Heart right ventricle (tissue), 16 donors: ENCODE measurements at regions of chr13 and their contacts with region 1.

Region 1: GRCh38 chr13:33542283-33543088 is 256.9 kb upstream of the STARD13 start:
- DNase-seq: peak; percentile 98 to 99
- ATAC-seq: peak; percentile 94 to 98 (median 96)
- H3K4me3 ChIP-seq: peak overlapping the region; percentile 11 to 62 (median 52)
- H3K27ac ChIP-seq: peak overlapping the region; percentile 92 to 99 (median 96)
- H3K4me1 ChIP-seq: peaks cover 2 to 45% (median 33%) of the 10 kb centered on the region in 9 donors
- H3K27me3 ChIP-seq: no peaks in the 10 kb centered on the region
- CTCF ChIP-seq: peak; percentile 75 to 97 (median 92)

Region 2: GRCh38 chr13:32669030-32669646 is 873.3 kb before region 1 on chr13:
- intact Hi-C with region 1: loop called in 1 of 10 experiments (anchors 10 kb)
- DNase-seq: no peak
- ATAC-seq: no peak
- H3K4me3 ChIP-seq: no peak overlapping the region
- H3K27ac ChIP-seq: no peak overlapping the region
- H3K4me1 ChIP-seq: no peaks in the 10 kb centered on the region
- H3K27me3 ChIP-seq: no peaks in the 10 kb centered on the region
- CTCF ChIP-seq: peak; percentile 34 to 79 (median 64)

Region 3: DNA sequence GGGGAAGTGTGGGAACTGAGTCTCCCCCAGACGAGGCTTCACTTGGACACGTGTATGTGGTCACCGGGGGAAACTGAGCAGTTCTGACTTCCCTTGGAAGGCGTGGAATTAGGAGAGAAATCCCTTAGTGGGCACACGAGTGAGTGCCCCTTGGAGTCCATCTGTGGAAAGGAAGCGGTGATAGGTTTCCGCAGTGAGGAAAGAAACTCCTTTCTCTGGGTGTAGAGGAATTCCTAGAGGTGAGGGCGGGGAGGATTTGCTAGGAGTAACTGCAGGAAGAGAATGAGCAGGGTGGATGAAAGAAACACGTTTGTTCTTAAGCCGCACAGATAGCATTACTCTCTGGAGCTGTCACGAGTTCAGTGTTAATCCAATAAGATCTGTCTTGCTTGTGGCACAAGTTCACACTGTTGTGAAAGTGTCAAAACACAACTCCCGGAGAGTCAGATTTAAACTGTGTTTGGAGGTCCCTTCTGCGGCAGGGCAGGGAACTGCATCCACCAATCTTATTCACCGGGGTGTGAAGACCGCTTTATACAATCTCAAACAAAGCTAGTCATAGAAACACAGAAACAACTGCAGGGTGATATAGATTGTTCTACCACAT is 525.1 kb before region 1 on chr13:
- intact Hi-C with region 1: loop called in 1 of 10 experiments (anchors 5 kb)
- DNase-seq: peak; percentile 35 to 62
- ATAC-seq: peak; percentile 72 to 86 (median 82)
- H3K4me3 ChIP-seq: peak overlapping the region; percentile 55 to 71 (median 64)
- H3K27ac ChIP-seq: peak overlapping the region; percentile 78 to 95 (median 91)
- H3K4me1 ChIP-seq: peaks cover 0 to 44% (median 17%) of the 10 kb centered on the region in 9 donors
- H3K27me3 ChIP-seq: peaks cover 0 to 38% (median 0%) of the 10 kb centered on the region in 7 donors
- CTCF ChIP-seq: peak; percentile 27 to 75 (median 62)

Region 4: DNA sequence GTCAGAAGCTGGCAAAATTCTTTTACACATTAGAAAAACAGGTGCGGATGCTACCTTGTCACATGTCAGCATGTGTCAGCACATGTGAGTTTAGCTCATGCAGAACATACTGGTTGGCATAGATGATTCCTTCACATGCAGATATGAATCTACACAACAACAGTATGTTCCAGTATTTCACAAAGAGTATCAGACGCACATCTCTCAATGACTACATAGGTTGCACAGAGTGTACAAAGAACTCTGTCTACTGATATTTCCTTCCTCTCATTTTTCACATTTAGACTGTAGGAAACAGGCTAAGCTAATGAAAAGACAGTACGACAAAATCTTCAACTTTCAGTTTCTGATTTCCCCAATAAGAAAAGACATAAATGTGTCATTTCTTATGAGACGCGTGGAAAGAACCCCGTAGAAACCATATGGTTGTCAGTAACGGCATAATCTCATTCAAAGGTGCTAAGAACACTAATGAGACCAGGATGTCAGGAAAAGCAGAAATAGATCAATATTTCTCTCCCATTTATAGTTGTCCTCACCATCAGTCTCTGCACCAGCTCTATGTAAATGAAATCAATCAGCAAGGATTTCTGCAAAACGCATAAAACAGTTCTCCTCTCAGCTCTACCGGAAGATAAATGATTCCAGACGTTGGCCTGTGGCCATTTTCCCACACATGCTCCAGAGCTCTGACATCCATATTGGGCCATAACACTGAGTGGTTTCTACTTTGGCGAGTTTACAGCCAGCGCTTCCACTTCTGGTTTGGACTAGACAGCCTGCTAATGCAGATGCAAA is 338.2 kb before region 1 on chr13:
- intact Hi-C with region 1: loop called in 1 of 10 experiments (anchors 5 kb)
- DNase-seq: peak; percentile 50 to 87
- ATAC-seq: peak; percentile 73 to 89 (median 82)
- H3K4me3 ChIP-seq: peak overlapping the region in 9 of 10 donors; percentile 21 to 54 (median 44)
- H3K27ac ChIP-seq: peak overlapping the region; percentile 54 to 87 (median 80)
- H3K4me1 ChIP-seq: peaks cover 27 to 99% (median 82%) of the 10 kb centered on the region in 9 donors
- H3K27me3 ChIP-seq: no peaks in the 10 kb centered on the region
- CTCF ChIP-seq: no peak

Region 5: DNA sequence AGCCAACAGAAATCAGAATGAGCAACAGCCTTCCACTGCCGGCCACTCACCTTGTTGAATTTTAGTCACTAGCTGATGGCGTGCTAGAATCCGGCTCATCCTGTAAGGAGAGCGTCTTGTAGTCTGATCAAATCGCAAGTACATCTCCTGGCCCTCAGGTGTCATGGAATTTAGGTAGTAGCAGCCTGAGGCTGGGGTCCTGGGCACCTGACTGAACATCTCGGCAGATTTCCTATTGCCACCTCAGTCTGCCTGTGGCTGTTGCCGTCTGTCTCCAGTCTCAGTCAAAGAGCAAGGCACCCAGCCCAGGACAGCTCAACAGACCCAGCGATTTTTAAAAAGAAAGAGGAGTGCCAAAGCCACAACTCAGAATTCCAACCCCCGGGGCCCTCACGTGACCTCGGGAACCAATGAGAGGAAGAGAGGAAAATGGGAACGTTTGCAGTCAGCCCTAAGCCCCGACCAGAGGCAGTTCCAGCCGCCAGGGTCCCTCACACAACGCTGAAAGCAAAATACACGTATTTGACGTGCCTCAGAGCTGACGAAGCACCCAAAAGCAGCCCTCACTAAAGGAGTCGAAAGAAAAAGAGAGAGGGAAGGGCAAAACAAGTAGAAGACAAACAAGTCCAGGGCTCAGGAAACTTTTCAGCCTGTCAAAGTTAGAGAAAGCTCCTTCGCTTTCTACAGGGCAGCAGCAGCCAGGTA is 256.9 kb before region 1 on chr13 and contains the start of gene STARD13:
- intact Hi-C with region 1: loop called in 5 of 10 experiments (anchors 1 to 5 kb)
- DNase-seq: peak; percentile 89 to 97
- ATAC-seq: peak; percentile 95 to 97 (median 96)
- H3K4me3 ChIP-seq: peak within 1 kb of the TSS; percentile 59 to 84 (median 72)
- H3K27ac ChIP-seq: peak within 1 kb of the TSS; percentile 84 to 98 (median 95)
- H3K4me1 ChIP-seq: peaks cover 5 to 60% (median 47%) of the 10 kb centered on the region in 9 donors
- H3K27me3 ChIP-seq: no peaks in the 10 kb centered on the region
- CTCF ChIP-seq: peak; percentile 15 to 69 (median 40)
- total RNA-seq, gene STARD13: 18.2 to 38.3 (median 28.5) TPM

Region 6: GRCh38 chr13:33349986-33350826 is 192.3 kb before region 1 on chr13:
- intact Hi-C with region 1: loop called in 4 of 10 experiments (anchors 2 to 5 kb)
- DNase-seq: peak; percentile 61 to 68
- ATAC-seq: peak; percentile 66 to 93 (median 78)
- H3K4me3 ChIP-seq: peak overlapping the region; percentile 59 to 96 (median 82)
- H3K27ac ChIP-seq: peak overlapping the region; percentile 61 to 96 (median 88)
- H3K4me1 ChIP-seq: peaks cover 0 to 61% (median 27%) of the 10 kb centered on the region in 9 donors
- H3K27me3 ChIP-seq: peaks cover 0 to 11% (median 0%) of the 10 kb centered on the region in 7 donors
- CTCF ChIP-seq: no peak

Region 7: GRCh38 chr13:33487575-33488243 is 54.8 kb before region 1 on chr13:
- intact Hi-C with region 1: no loop called
- DNase-seq: peak in 1 of 2 donors; percentile 19
- ATAC-seq: peak; percentile 71 to 93 (median 83)
- H3K4me3 ChIP-seq: peak overlapping the region in 5 of 10 donors; percentile 18 to 34 (median 25)
- H3K27ac ChIP-seq: peak overlapping the region in 7 of 10 donors; percentile 3 to 46 (median 20)
- H3K4me1 ChIP-seq: peaks cover 0 to 20% (median 5%) of the 10 kb centered on the region in 9 donors
- H3K27me3 ChIP-seq: no peaks in the 10 kb centered on the region
- CTCF ChIP-seq: peak in 7 of 9 donors; percentile 34 to 61 (median 50)

Region 8: DNA sequence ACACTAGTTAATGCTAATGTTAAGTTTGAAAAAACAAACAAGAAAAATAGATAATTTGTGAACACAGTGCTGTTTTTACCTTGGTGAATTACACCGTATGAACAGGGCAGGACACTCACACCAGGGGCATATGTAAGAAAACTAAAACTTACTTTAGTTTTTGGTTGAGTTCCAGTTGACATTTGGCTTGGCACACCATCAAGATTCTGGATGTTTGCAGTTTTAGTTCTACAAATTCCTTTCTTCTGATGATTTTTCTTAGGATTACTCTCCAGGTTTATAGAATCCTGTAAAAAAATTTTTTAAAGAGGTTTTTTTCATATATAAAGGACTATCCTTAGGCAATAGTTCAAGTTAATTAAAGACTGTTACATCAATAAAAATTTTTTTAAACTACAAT is 18.4 kb before region 1 on chr13:
- intact Hi-C with region 1: no loop called
- DNase-seq: no peak
- ATAC-seq: no peak
- H3K4me3 ChIP-seq: no peak overlapping the region
- H3K27ac ChIP-seq: no peak overlapping the region
- H3K4me1 ChIP-seq: peaks cover 0 to 17% (median 0%) of the 10 kb centered on the region in 9 donors
- H3K27me3 ChIP-seq: no peaks in the 10 kb centered on the region
- CTCF ChIP-seq: no peak

Region 9: GRCh38 chr13:33723772-33724435 is 181.4 kb after region 1 on chr13:
- intact Hi-C with region 1: loop called (anchors 2 to 10 kb)
- DNase-seq: peak; percentile 27 to 86
- ATAC-seq: peak; percentile 83 to 94 (median 88)
- H3K4me3 ChIP-seq: no peak overlapping the region
- H3K27ac ChIP-seq: peak overlapping the region in 7 of 10 donors; percentile 62 to 84 (median 77)
- H3K4me1 ChIP-seq: peaks cover 6 to 55% (median 36%) of the 10 kb centered on the region in 9 donors
- H3K27me3 ChIP-seq: no peaks in the 10 kb centered on the region
- CTCF ChIP-seq: peak; percentile 41 to 90 (median 78)

Region 10: DNA sequence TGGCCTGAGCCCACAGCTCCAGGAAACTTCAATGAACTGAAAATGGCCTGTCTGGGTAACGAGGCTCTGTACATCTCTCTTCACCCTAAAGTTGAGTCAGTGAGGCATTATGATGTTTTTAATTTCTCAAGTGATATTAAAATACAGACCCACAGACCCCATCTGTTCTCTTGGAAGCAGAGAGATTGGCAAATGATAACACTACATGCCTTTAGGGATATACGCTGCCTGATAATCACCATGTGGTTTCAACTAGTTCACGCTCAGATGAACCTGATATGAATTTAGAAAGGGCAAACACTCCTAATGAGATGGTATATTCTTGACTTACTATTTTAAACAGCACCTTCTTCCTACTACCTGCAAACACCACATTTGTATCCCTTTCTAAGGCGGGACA is 403.0 kb after region 1 on chr13:
- intact Hi-C with region 1: no loop called
- DNase-seq: no peak
- ATAC-seq: no peak
- H3K4me3 ChIP-seq: no peak overlapping the region
- H3K27ac ChIP-seq: no peak overlapping the region
- H3K4me1 ChIP-seq: no peaks in the 10 kb centered on the region
- H3K27me3 ChIP-seq: no peaks in the 10 kb centered on the region
- CTCF ChIP-seq: no peak